SK-N-SH (cell line): ENCODE measurements at regions of chr2 and their contacts with region 1.

Region 1: GRCh38 chr2:105545730-105546627 is 147.1 kb upstream of the FHL2 start:
- DNase-seq: peak; percentile 75
- H3K4me3 ChIP-seq: no peak overlapping the region; a peak in 1 of 4 replicates
- H3K27ac ChIP-seq: no peak overlapping the region
- H3K4me1 ChIP-seq: no peaks in the 10 kb centered on the region; a peak in 1 of 4 replicates
- H3K27me3 ChIP-seq: peaks cover 9% of the 10 kb centered on the region; the same call in 1 of the 2 replicates
- CTCF ChIP-seq: peak; percentile 89
- EP300 ChIP-seq: no peak
- RAD21 ChIP-seq: peak; percentile 72

Region 2: GRCh38 chr2:105369747-105370690 is 176.0 kb before region 1 on chr2:
- CTCF ChIA-PET with region 1: interaction called, 13 read pairs
- POLR2A ChIA-PET with region 1: no interaction called
- DNase-seq: peak; percentile 75
- H3K4me3 ChIP-seq: no peak overlapping the region
- H3K27ac ChIP-seq: no peak overlapping the region
- H3K4me1 ChIP-seq: peaks cover 0 to 4% of the 10 kb centered on the region in 2 experiments; a peak in 1 of 4 replicates
- H3K27me3 ChIP-seq: no peaks in the 10 kb centered on the region
- CTCF ChIP-seq: peak; percentile 84
- EP300 ChIP-seq: no peak
- RAD21 ChIP-seq: peak; percentile 98

Region 3: DNA sequence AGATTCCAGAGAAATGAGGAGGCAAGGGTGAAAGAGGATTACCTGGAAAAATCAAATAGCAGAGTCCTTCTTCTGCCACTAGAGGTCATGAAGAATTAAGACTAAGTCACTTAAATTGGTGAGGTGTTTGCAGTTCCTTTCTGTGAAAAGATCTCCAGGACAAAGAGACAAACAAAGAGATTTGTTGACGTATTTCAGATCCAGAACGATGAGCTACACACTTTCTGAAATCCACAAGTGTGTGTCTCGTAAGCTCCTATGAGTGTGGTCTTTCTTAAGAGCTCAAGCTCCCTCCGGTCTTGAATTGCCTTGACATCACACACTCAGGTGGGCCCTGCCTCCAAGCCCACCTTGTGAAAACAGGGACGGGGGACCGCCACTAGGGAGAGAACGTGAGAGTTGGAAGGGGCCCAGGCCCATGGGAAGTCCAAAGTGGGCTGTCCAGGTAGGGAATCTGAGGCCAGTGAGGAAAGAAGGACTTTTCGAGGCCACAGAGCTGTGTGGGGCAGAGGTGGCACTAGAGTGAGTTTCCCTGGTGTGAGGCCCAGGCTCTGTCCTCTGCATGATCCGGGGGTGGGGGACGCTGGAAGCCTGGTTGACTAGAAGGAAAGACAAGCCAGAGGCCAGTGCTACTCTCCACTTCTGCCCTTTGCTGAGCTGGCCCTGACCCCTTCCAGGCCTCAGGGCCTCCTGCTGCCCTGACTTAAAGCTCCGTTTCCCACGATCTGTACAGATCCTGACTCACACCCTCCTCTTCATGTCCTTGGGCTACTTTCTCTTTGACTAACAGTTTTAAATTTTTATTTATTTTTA is 30.7 kb after region 1 on chr2:
- CTCF ChIA-PET with region 1: no interaction called
- POLR2A ChIA-PET with region 1: no interaction called
- DNase-seq: peak; percentile 47
- H3K4me3 ChIP-seq: no peak overlapping the region
- H3K27ac ChIP-seq: no peak overlapping the region
- H3K4me1 ChIP-seq: no peaks in the 10 kb centered on the region; a peak in 1 of 4 replicates
- H3K27me3 ChIP-seq: no peaks in the 10 kb centered on the region
- CTCF ChIP-seq: peak; percentile 57
- EP300 ChIP-seq: no peak
- RAD21 ChIP-seq: peak; percentile 85